ENCODE measurements at regions of chr10 and their contacts with region 1.

Region 1: GRCh38 chr10:112122827-112123226 is 60.7 kb downstream of the GPAM start:
- DNase-seq: no peak
- H3K4me3 ChIP-seq: no peak overlapping the region
- H3K27ac ChIP-seq: no peak overlapping the region
- H3K4me1 ChIP-seq: no peaks in the 10 kb centered on the region
- H3K27me3 ChIP-seq: peaks cover 64% of the 10 kb centered on the region
- CTCF ChIP-seq: no peak

Region 2: DNA sequence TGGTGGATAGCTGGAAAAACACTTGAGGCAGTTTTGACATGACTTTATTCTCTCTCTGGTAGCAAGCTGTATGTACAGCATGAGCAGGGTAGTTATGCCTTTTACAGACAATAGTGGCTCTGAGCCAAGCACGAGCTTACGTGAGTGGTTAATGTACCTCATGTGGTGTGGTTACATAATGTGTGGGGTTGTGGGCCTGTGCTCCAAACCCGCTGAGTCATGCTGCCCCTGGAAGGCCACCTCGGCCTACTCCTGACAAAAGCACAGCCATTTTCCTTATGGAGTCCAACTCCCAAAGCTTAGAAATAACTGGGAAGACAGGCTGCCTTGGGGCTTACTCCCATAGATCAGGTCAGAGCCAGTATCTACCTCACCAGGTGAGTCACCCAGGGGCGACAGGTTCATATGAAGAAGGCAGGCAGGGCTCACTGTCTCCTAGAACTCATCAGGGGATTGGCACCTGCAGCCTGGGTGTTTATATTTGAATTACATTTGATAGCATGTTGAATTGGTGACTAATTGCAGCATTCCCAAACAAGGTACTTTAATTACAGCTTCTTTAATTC is 641.5 kb before region 1 on chr10:
- CTCF ChIA-PET with region 1: no interaction called
- POLR2A ChIA-PET with region 1: no interaction called
- intact Hi-C with region 1: no loop called
- DNase-seq: no peak
- H3K4me3 ChIP-seq: no peak overlapping the region
- H3K27ac ChIP-seq: no peak overlapping the region
- H3K4me1 ChIP-seq: no peaks in the 10 kb centered on the region
- H3K27me3 ChIP-seq: no peaks in the 10 kb centered on the region
- CTCF ChIP-seq: no peak

Region 3: DNA sequence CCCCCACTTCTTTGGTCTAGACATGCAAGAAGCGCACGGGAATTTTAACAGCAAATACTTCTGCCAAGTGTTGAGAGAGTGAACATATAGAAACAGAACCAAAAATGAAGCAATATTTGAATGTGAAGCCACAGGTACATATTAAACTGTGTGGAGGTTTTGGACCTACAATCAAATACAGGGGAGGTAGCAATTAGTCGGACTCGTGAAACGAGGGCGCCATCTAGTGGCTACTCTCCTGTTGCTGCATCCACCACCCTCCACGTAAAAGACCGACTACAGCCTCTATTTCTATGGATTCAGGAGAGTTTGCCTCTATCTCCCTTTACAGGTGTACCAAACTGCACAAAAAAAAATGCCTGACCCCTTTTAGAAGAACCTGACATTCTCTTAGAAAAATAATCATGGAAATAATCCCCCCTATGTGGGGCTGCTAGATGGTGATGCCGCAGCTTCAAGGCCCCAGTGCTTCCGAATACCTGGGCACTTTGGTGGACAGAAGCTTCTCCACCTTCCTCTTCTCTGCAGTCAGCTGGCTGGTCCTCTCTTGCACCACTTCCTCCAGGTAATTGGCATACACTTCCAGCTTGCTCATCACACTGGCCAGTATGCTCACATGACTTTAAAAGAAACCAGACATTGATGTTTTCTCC is 192.1 kb after region 1 on chr10:
- CTCF ChIA-PET with region 1: interaction called, 16 read pairs
- POLR2A ChIA-PET with region 1: no interaction called
- intact Hi-C with region 1: no loop called
- DNase-seq: peak in 1 of 2 experiments; percentile 58
- H3K4me3 ChIP-seq: no peak overlapping the region
- H3K27ac ChIP-seq: no peak overlapping the region
- H3K4me1 ChIP-seq: no peaks in the 10 kb centered on the region
- H3K27me3 ChIP-seq: no peaks in the 10 kb centered on the region
- CTCF ChIP-seq: peak; percentile 83

Region 4: GRCh38 chr10:113199459-113199858 is 1076.6 kb after region 1 on chr10:
- CTCF ChIA-PET with region 1: no interaction called
- POLR2A ChIA-PET with region 1: no interaction called
- intact Hi-C with region 1: no loop called
- DNase-seq: no peak
- H3K4me3 ChIP-seq: no peak overlapping the region
- H3K27ac ChIP-seq: no peak overlapping the region
- H3K4me1 ChIP-seq: no peaks in the 10 kb centered on the region
- H3K27me3 ChIP-seq: no peaks in the 10 kb centered on the region
- CTCF ChIP-seq: no peak